ENCODE measurements at regions of chr7 and their contacts with region 1.

Region 1: DNA sequence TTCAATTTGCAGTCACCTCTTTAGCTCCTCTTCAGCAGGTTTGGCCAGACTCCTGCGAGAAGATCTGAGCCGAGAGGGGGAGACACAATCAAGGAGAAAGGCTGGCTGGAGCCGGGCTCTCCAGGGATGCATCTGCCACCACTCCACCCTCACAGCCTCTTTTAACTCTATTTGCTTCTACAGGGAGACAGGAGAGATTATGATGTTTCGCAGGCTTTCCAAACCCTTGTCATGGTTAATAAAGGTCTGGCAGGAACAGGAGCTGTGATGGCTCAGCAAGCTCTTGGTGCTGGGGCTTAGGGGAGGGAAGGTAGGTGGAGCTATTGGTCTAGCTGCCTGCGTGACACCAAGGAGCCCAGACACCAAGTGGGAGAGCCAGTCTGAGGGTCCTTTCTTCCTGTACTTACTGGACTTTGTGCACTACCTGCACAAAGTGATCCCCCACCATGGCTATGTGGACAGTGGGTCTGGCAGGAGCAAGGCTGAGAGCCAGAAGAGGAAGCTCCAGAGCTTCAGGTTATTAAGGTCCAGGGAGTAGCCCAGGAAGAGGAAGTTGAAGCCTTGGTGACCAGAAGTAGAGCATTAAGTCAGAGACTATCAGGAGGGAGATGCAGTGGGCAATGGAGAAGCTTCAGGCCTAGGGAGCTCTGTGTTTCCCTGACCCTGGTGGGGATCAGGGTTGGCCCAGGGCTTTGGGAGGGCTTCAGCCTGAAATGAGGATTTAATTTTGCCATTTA is 448.3 kb upstream of the PODXL start:
- DNase-seq: no peak
- H3K4me3 ChIP-seq: no peak overlapping the region
- H3K27me3 ChIP-seq: 0 out of 2 replicates have a peak, but pooled peaks cover 1% of the 10 kb centered on the region
- CTCF ChIP-seq: peak; percentile 39

Region 2: DNA sequence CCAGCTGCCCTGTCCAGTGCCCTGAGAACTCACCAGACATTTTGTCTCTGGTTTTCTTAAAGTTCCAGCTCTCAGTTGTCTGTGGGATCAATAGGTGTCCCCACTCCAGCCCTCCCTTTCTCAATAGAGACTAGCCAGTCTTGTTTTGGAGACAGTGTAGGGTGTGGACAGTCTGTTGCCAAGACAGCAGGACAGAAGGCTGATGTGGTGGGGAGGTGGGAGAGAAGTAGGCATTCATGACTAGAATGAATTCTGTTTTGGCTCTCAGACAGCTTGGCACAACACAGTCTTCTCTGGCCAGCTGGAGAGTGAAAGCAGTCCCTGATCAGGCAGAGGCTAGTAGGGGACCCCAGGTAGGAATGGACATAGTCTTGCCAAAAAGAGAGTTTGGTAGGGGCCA is 18.8 kb after region 1 on chr7:
- CTCF ChIA-PET with region 1: no interaction called
- POLR2A ChIA-PET with region 1: no interaction called
- DNase-seq: no peak
- H3K4me3 ChIP-seq: no peak overlapping the region
- H3K27me3 ChIP-seq: peaks cover 2% of the 10 kb centered on the region; the same call in 1 of the 2 replicates
- CTCF ChIP-seq: no peak

Region 3: GRCh38 chr7:132249614-132249972 is 244.9 kb after region 1 on chr7:
- CTCF ChIA-PET with region 1: interaction called, 16 read pairs
- POLR2A ChIA-PET with region 1: no interaction called
- DNase-seq: no peak
- H3K4me3 ChIP-seq: no peak overlapping the region
- H3K27me3 ChIP-seq: no peaks in the 10 kb centered on the region
- CTCF ChIP-seq: peak; percentile 9; the same call in 1 of the 2 replicates